IMR-90 (cell line): ENCODE measurements at regions of chr1 and their contacts with region 1.

Region 1: DNA sequence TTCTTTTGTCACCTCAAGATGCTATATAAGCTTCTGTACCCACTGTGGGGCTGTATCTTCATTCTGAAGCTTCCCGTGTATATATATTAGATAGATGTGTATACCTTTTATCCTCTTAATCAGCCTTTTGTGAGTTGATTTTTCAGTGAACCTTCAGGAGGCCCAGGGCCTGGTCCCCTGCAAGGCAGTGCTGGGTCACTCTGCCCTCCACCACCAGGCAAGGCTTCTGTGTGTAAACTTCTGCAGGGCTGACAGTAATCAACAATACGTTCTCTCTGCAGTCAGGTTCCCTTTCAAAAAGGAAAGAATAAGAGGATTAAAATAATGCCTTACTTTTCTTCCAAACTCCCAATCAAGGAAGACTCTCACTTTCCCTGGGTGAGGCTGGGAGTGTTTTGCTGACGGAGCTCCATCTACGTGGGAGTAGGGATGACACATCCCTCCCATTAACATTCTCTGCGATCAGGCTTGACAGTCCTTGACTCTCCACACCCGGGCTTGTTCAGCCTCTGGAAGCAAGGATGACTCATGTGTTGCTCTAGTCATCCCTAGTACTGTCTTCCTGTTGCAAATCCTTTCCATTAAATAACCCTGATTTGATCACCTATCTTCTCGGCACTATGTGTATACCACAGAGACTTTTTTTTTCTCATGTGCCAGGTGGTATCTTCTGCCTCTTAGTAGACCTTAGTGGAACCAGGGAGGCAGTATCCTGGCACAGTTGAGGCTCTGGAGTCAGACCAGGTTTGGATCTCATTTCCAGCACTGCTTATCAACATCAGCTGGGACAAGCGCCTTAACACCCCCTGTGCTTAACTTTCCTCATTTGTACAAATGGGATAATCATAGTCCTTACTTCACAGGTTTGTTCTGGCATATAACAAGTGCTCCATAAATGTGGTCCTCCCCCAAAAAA is 70.3 kb upstream of the KCNK1 start:
- DNase-seq: peak; percentile 33
- ATAC-seq: no peak
- H3K4me3 ChIP-seq: no peak overlapping the region
- H3K27ac ChIP-seq: no peak overlapping the region
- H3K4me1 ChIP-seq: no peaks in the 10 kb centered on the region
- H3K27me3 ChIP-seq: no peaks in the 10 kb centered on the region
- CTCF ChIP-seq: no peak
- POLR2A ChIP-seq: no peak
- RAD21 ChIP-seq: no peak

Region 2: DNA sequence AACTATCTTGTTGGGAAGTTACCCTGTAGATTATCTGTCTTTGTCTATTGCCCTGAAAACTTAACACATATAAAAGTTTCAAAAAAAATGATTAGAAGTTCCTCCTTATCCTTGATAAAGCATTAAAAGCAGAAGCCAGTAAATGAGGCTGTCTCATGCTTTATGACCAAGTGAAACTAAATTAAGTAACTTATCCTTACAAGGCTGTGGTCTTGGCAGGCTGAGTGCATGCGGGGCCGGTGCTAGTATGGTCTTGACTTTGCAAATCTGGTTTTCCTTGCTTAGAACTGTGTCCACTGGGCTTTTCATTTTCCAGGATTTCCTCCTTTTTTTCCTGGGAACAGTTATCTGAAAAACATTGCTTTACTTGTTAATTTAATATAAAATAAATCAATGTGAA is 291.2 kb before region 1 on chr1:
- CTCF ChIA-PET with region 1: no interaction called
- POLR2A ChIA-PET with region 1: no interaction called
- dilution Hi-C with region 1: no loop called
- in situ Hi-C with region 1: no loop called
- intact Hi-C with region 1: no loop called
- DNase-seq: no peak
- ATAC-seq: no peak
- H3K4me3 ChIP-seq: no peak overlapping the region
- H3K27ac ChIP-seq: no peak overlapping the region
- H3K4me1 ChIP-seq: peaks cover 10% of the 10 kb centered on the region
- H3K27me3 ChIP-seq: no peaks in the 10 kb centered on the region
- CTCF ChIP-seq: no peak
- POLR2A ChIP-seq: no peak
- RAD21 ChIP-seq: no peak

Region 3: DNA sequence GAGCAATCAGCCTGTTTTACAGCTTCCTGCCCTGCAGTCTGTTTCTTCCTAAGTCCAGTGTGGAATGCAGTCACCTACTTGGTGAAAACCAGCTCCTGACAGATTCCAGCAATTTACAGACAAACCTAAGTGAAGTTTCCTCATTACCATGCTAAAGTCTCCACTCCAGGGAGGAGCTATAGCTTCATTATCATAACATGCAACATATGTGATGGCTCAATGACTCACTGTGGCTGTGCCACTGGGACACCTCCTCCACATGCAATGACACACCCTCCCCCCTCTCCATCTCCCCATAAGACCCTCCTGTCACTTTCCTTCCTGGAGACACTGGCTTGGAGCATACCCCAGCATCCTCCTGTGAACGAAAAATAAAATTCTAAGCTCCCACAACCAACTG is 90.9 kb before region 1 on chr1:
- CTCF ChIA-PET with region 1: no interaction called
- POLR2A ChIA-PET with region 1: no interaction called
- dilution Hi-C with region 1: no loop called
- in situ Hi-C with region 1: no loop called
- intact Hi-C with region 1: loop called (anchors 5 kb)
- DNase-seq: no peak
- ATAC-seq: no peak
- H3K4me3 ChIP-seq: no peak overlapping the region
- H3K27ac ChIP-seq: no peak overlapping the region
- H3K4me1 ChIP-seq: no peaks in the 10 kb centered on the region
- H3K27me3 ChIP-seq: no peaks in the 10 kb centered on the region
- CTCF ChIP-seq: no peak
- POLR2A ChIP-seq: no peak
- RAD21 ChIP-seq: no peak

Region 4: DNA sequence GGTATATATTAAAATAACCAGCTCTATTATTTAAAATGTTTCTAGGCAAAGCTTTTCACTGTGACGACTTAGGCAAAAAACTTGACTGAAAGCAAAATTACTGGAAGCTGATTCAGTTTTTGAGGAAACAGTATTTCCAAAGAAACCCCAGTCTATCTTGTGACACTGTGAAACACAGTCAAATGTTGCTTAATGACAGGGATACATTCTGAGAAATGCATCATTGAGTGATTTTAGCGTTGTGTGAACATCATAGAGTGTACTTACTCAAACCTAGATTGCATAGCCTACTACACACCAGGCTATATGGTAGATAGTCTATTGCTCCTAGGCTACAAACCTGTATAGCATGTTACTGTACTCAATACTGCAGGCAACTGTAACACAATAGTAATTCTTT is 46.6 kb before region 1 on chr1:
- CTCF ChIA-PET with region 1: no interaction called
- POLR2A ChIA-PET with region 1: no interaction called
- dilution Hi-C with region 1: no loop called
- in situ Hi-C with region 1: no loop called
- intact Hi-C with region 1: loop called (anchors 2 kb)
- DNase-seq: no peak
- ATAC-seq: no peak
- H3K4me3 ChIP-seq: no peak overlapping the region
- H3K27ac ChIP-seq: no peak overlapping the region
- H3K4me1 ChIP-seq: no peaks in the 10 kb centered on the region
- H3K27me3 ChIP-seq: no peaks in the 10 kb centered on the region
- CTCF ChIP-seq: no peak
- POLR2A ChIP-seq: no peak
- RAD21 ChIP-seq: no peak

Region 5: GRCh38 chr1:233607252-233608119 is 63.9 kb after region 1 on chr1:
- CTCF ChIA-PET with region 1: no interaction called
- POLR2A ChIA-PET with region 1: no interaction called
- dilution Hi-C with region 1: no loop called
- in situ Hi-C with region 1: no loop called
- intact Hi-C with region 1: no loop called
- DNase-seq: no peak
- ATAC-seq: no peak
- H3K4me3 ChIP-seq: no peak overlapping the region
- H3K27ac ChIP-seq: no peak overlapping the region
- H3K4me1 ChIP-seq: no peaks in the 10 kb centered on the region
- H3K27me3 ChIP-seq: no peaks in the 10 kb centered on the region; the same call in 1 of the 2 replicates
- CTCF ChIP-seq: no peak
- POLR2A ChIP-seq: no peak
- RAD21 ChIP-seq: no peak